ENCODE measurements at regions of chr16 and their contacts with region 1.

Region 1: GRCh38 chr16:11639925-11640899 is 28.0 kb upstream of the SNN start:
- DNase-seq: peak; percentile 90
- ATAC-seq: peak; percentile 75
- H3K4me3 ChIP-seq: peak overlapping the region in 1 of 3 experiments; percentile 63; a peak in 2 of 6 replicates
- H3K27ac ChIP-seq: peak overlapping the region; percentile 0
- H3K4me1 ChIP-seq: peaks cover 34% of the 10 kb centered on the region
- H3K27me3 ChIP-seq: peaks cover 0 to 11% of the 10 kb centered on the region in 2 experiments; a peak in 2 of 5 replicates
- CTCF ChIP-seq: no peak; the same call in none of the 2 replicates
- EP300 ChIP-seq: peak in 1 of 2 experiments; percentile 90; a peak in 2 of 4 replicates
- POLR2A ChIP-seq: peak in 1 of 2 experiments; percentile 63; a peak in 1 of 4 replicates
- RAD21 ChIP-seq: no peak

Region 2: GRCh38 chr16:11530171-11530940 is 109.9 kb before region 1 on chr16:
- CTCF ChIA-PET with region 1: interaction called, 68 read pairs
- POLR2A ChIA-PET with region 1: interaction called, 6 read pairs
- in situ Hi-C with region 1: loop called (anchors 5 kb)
- intact Hi-C with region 1: loop called (anchors 1 kb)
- DNase-seq: peak; percentile 27
- ATAC-seq: no peak
- H3K4me3 ChIP-seq: no peak overlapping the region
- H3K27ac ChIP-seq: no peak overlapping the region
- H3K4me1 ChIP-seq: peaks cover 21% of the 10 kb centered on the region
- H3K27me3 ChIP-seq: peaks cover 0 to 4% of the 10 kb centered on the region in 2 experiments; a peak in 3 of 5 replicates
- CTCF ChIP-seq: no peak
- EP300 ChIP-seq: no peak
- POLR2A ChIP-seq: no peak
- RAD21 ChIP-seq: no peak